Activated CD8-positive, alpha-beta memory T cell treated with anti-CD3 and anti-CD28 coated beads, Interleukin-2, amount 10 ng/mL, durations not matched to agents 7 days and 5 days (primary cell): ENCODE measurements at regions of chr11 and their contacts with region 1.

Region 1: GRCh38 chr11:66344550-66345315 is at the start of gene BRMS1:
- DNase-seq: peak; percentile 99
- ATAC-seq: peak; percentile 81
- H3K4me3 Mint-ChIP-seq: peak within 1 kb of the TSS; percentile 95
- H3K27ac Mint-ChIP-seq: peak within 1 kb of the TSS; percentile 95
- H3K4me1 Mint-ChIP-seq: peaks cover 47% of the 10 kb centered on the region
- H3K27me3 Mint-ChIP-seq: no peaks in the 10 kb centered on the region
- total RNA-seq, gene BRMS1: 55.3 to 56.8 TPM

Region 2: GRCh38 chr11:66258473-66258893 is 86.2 kb before region 1 on chr11:
- CTCF ChIA-PET with region 1: no interaction called
- DNase-seq: no peak
- ATAC-seq: peak; percentile 1
- H3K4me3 Mint-ChIP-seq: peak overlapping the region; percentile 87
- H3K27ac Mint-ChIP-seq: peak overlapping the region; percentile 98
- H3K4me1 Mint-ChIP-seq: peaks cover 26% of the 10 kb centered on the region
- H3K27me3 Mint-ChIP-seq: no peaks in the 10 kb centered on the region

Region 3: GRCh38 chr11:66363805-66364535 is 19.2 kb after region 1 on chr11:
- CTCF ChIA-PET with region 1: interaction called, 15 read pairs
- DNase-seq: peak; percentile 77
- ATAC-seq: peak; percentile 54
- H3K4me3 Mint-ChIP-seq: no peak overlapping the region
- H3K27ac Mint-ChIP-seq: no peak overlapping the region
- H3K4me1 Mint-ChIP-seq: no peaks in the 10 kb centered on the region
- H3K27me3 Mint-ChIP-seq: no peaks in the 10 kb centered on the region

Region 4: GRCh38 chr11:66459138-66459778 is 114.5 kb after region 1 on chr11:
- CTCF ChIA-PET with region 1: no interaction called
- DNase-seq: no peak
- ATAC-seq: peak; percentile 20
- H3K4me3 Mint-ChIP-seq: no peak overlapping the region
- H3K27ac Mint-ChIP-seq: no peak overlapping the region
- H3K4me1 Mint-ChIP-seq: peaks cover 32% of the 10 kb centered on the region
- H3K27me3 Mint-ChIP-seq: no peaks in the 10 kb centered on the region